Activated CD4-positive, alpha-beta T cell treated with anti-CD3 and anti-CD28 coated beads, Interleukin-2, amount 10 ng/mL, durations not matched to agents 24 days and 14 days (primary cell): ENCODE measurements at regions of chr4 and their contacts with region 1.

Region 1: GRCh38 chr4:56799824-56800756 is 21.4 kb downstream of the SPINK2 start:
- DNase-seq: peak; percentile 94
- H3K4me3 Mint-ChIP-seq: peak overlapping the region; percentile 89
- H3K27ac Mint-ChIP-seq: peak overlapping the region; percentile 11
- H3K4me1 Mint-ChIP-seq: peaks cover 20% of the 10 kb centered on the region
- H3K27me3 Mint-ChIP-seq: peaks cover 13% of the 10 kb centered on the region

Region 2: GRCh38 chr4:56197387-56197786 is 602.7 kb before region 1 on chr4:
- intact Hi-C with region 1: no loop called
- DNase-seq: no peak
- H3K4me3 Mint-ChIP-seq: no peak overlapping the region
- H3K27ac Mint-ChIP-seq: no peak overlapping the region
- H3K4me1 Mint-ChIP-seq: no peaks in the 10 kb centered on the region
- H3K27me3 Mint-ChIP-seq: peaks cover 16% of the 10 kb centered on the region

Region 3: GRCh38 chr4:56544573-56545131 is 255.4 kb before region 1 on chr4:
- intact Hi-C with region 1: loop called (anchors 1 kb)
- DNase-seq: peak; percentile 96
- H3K4me3 Mint-ChIP-seq: peak overlapping the region; percentile 77
- H3K27ac Mint-ChIP-seq: no peak overlapping the region
- H3K4me1 Mint-ChIP-seq: peaks cover 8% of the 10 kb centered on the region
- H3K27me3 Mint-ChIP-seq: peaks cover 18% of the 10 kb centered on the region

Region 4: DNA sequence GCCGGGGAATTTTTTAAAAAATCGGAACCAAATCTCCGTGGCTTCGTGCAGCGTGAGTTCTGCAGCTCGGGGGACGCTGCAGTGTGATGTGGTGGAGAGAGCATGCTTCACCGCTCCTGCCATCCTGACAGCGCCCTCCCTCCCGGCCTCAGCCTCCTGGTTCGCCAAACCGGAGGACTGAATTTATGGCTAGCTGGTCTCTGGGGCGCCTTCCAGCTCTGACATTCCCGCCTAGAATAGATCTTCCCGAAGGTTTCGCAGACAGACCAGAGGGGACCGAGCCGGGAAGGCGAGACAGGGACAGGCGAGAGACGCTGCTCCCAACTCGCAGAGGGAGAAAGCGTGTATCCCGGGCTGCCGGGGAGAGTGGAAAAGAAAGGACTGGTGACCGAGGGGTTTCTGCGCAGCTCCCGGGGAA is 144.9 kb before region 1 on chr4:
- intact Hi-C with region 1: loop called (anchors 2 kb)
- DNase-seq: peak; percentile 64
- H3K4me3 Mint-ChIP-seq: peak overlapping the region; percentile 95
- H3K27ac Mint-ChIP-seq: peak overlapping the region; percentile 88
- H3K4me1 Mint-ChIP-seq: peaks cover 59% of the 10 kb centered on the region
- H3K27me3 Mint-ChIP-seq: peaks cover 29% of the 10 kb centered on the region

Region 5: GRCh38 chr4:56681158-56681852 is 118.8 kb before region 1 on chr4 and contains the start of gene HOPX:
- intact Hi-C with region 1: loop called (anchors 1 kb)
- DNase-seq: peak; percentile 80
- H3K4me3 Mint-ChIP-seq: peak within 1 kb of the TSS; percentile 52
- H3K27ac Mint-ChIP-seq: peak within 1 kb of the TSS; percentile 47
- H3K4me1 Mint-ChIP-seq: peaks cover 20% of the 10 kb centered on the region
- H3K27me3 Mint-ChIP-seq: peaks cover 53% of the 10 kb centered on the region
- total RNA-seq, gene HOPX: 86.3 and 88.5 TPM in 2 replicates

Region 6: DNA sequence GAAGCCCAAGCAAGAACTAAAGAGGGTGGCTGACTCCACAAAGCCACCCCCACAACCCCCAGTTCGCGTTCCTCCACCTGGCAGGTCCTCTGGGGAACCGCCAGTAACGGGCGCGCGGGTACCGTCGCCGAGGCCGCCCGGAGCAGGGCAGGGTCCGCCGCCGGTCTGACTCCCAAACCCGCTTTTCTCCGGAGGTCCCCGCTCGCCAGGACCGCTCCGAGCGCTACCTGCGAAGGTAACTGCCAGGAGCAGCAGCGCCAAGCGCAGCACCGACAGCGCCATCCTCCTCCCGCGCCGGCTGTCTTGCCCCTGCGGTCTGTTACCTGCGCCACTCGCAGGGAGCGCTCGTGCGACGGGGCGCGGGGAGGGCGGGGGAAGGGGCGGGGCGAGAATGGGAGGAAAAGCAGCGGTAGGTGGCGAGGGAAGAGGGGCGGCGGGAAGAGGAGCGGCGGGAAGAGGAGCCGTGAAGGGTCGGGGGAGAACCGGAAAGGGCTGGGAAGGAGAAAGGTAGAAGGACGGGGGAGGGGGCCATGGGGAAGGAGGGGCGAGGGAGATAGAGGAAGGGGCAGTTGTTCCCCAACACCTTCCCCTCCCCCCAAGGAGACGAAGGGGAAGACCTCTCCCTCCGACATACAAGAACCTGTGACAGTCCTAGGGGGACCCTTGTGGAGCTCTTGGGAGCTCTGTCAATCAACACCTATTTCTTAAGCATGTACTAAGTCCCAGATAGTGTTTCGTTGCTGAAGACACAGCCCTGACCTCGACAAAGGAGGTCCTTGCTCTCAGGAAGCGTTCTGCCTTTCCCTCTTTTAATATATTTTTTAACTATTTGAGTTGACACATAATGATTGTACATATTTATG is 21.5 kb after region 1 on chr4 and contains the start of gene SPINK2:
- intact Hi-C with region 1: loop called (anchors 1 kb)
- DNase-seq: peak; percentile 86
- H3K4me3 Mint-ChIP-seq: peak within 1 kb of the TSS; percentile 72
- H3K27ac Mint-ChIP-seq: no peak within 1 kb of the TSS
- H3K4me1 Mint-ChIP-seq: peaks cover 33% of the 10 kb centered on the region
- H3K27me3 Mint-ChIP-seq: peaks cover 36% of the 10 kb centered on the region
- total RNA-seq, gene SPINK2: 0.37 and 0.54 TPM in 2 replicates